Left cardiac atrium (tissue), 4 donors: ENCODE measurements at regions of chr4 and their contacts with region 1.

Region 1: DNA sequence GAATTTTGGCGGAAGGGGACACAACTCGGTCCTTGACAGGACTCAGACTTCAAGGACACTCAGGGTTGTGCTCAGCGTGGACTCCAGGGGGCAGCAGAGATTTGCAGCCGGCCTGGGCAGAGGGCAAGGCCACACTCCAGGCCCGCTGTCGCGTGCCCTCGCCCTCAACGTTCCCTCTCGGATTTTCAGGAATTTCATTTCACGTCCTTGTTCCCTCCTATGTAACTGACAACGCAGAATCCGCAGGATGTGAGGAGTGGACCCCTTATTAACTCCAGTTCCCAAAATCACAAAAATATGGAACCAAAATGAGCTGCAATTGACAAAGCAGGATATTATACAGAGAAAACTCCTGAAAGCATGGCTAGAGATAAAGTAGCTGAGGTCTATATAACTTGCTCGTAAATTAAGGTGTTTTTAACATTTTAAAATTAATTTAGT is 21.0 kb upstream of the DCTD start:
- DNase-seq: peak; percentile 74
- ATAC-seq: peak; percentile 98

Region 2: DNA sequence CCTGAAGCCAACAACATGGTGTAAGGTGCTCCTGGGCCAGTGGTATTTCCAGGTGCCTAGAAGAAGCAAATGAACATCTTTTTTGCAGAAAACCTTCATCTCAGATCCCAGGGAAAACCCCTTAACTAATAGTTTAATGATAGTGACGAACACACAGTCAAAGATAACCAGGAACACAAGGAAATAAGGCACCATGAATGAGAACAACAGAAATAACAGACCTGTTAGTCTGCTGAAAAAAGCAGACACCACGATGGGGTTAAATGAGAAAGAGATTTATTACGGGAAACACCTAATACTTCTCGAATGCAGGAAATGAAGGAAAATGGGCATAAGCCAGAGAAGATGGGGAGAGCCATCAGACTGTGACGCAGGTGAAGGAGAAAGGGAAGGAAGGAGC is 130.3 kb after region 1 on chr4:
- intact Hi-C with region 1: loop called (anchors 5 to 10 kb)
- DNase-seq: no peak
- ATAC-seq: no peak

Region 3: GRCh38 chr4:183074296-183074990 is 136.2 kb after region 1 on chr4:
- intact Hi-C with region 1: loop called (anchors 5 to 10 kb)
- DNase-seq: no peak
- ATAC-seq: no peak

Region 4: DNA sequence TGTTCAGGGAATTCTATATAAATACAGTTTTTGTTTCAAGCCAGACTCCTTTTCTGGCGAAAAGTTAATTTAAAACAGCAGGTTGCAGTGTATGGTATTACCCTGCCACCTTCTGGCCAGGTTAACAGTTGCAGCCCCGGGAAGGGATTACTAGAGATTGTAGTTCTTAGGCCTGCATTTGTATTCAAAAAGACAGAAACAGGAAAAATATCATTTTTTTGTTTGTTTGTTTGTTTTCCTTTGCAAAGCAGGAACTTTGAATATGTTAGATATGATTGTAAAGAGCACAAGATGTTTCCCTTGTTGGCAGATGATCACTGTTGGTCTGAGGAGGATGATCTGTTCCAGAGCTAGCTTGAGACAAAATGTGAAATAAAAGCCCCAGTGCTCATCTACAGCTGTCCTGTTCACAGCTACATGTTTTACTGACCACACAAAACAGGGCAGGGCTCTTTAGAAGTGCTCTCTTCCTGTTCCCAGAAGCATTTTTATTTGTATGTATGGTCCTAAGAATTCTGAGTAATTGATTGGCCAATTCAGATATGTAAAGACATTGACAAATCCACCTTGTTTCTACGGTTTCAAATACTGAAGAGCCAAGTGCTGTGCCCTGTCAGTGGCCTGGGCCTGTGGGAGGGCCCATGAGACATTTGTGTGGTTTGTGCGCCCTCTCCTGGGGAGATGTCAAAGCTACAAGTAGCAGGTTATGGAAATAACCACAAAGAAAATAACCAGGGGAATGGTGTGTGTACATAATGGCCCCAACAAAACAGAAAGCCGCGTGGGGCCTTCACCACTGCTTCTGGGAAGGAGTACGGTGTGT is 323.9 kb after region 1 on chr4:
- intact Hi-C with region 1: loop called (anchors 2 to 5 kb)
- DNase-seq: peak; percentile 82
- ATAC-seq: peak; percentile 94 to 97

Region 5: GRCh38 chr4:183402771-183403170 is 464.5 kb after region 1 on chr4:
- intact Hi-C with region 1: loop called in 1 of 2 experiments (anchors 5 kb)
- DNase-seq: no peak
- ATAC-seq: peak in 1 of 2 donors; percentile 3